T-cell (primary cell): ENCODE measurements at regions of chr7 and their contacts with region 1.

Region 1: DNA sequence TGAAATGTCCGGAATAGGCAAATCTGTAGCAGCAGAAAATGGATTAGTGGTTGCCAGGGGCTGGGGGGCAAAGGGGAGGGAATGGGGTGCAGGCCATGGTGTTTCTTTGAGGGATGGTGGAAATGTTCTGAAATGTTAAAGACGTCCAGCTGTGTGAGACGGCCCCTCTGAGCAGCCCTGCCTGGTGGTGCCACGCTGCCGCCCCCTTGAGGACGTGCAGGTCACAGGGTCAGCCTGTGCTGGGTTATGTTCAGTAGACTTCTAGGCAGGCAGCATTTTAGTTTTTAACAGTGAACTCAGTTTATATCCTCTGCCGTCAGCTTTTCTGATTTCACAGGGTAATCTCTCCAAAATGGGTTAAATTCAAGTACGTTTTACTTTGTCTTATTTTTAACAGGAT is 9.4 kb downstream of the NUB1 start:
- DNase-seq: peak in 3 of 35 experiments; percentile 20 to 44 (median 26)
- ATAC-seq: no peak
- H3K4me3 ChIP-seq: no peak overlapping the region
- H3K4me3 Mint-ChIP-seq: peak overlapping the region; percentile 17 to 78 (median 60)
- H3K27ac ChIP-seq: peak overlapping the region; percentile 98
- H3K27ac Mint-ChIP-seq: peak overlapping the region; percentile 86 to 91
- H3K4me1 ChIP-seq: peaks cover 28 to 37% of the 10 kb centered on the region in 2 experiments
- H3K4me1 Mint-ChIP-seq: peaks cover 56 to 65% (median 61%) of the 10 kb centered on the region in 3 donors
- H3K27me3 ChIP-seq: no peaks in the 10 kb centered on the region
- H3K27me3 Mint-ChIP-seq: no peaks in the 10 kb centered on the region

Region 2: DNA sequence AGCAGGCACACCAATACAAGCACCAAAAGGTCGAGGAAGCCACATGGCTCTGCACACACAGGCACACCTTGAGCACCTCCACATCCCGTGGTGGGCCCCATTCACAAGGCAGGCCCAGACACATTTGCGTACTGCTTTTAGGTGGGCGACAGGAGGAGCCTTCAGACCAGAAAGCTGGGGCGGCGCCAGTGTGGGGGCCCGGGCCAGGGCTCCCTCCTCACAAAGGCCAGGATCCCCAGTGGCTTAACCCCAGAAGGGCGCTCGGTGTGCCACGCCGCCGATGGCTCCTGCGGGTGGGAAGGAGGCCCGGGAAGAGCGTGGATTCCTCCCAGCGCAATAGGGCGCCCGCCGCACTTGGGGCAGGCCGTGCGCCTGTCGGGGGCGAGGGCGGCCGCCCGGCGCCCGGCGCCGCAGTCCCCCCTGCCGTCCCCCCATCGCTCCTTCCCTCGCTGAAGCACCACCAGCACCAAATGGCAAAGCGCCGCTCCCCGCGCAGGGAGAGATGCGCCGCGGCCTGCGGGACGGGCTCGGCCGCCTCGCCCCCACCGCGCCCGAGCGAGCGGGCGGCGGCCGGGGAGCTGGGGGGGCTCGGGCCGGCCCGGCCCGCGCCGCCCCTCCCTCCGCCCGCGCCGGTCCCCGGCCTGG is 99.6 kb before region 1 on chr7:
- CTCF ChIA-PET with region 1: no interaction called
- POLR2A ChIA-PET with region 1: no interaction called
- DNase-seq: peak in 9 of 35 experiments; percentile 16 to 56 (median 41)
- ATAC-seq: peak; percentile 32 to 45 (median 42)
- H3K4me3 ChIP-seq: peak overlapping the region in 1 of 2 donors; percentile 55
- H3K4me3 Mint-ChIP-seq: peak overlapping the region; percentile 66 to 87 (median 67)
- H3K27ac ChIP-seq: no peak overlapping the region
- H3K27ac Mint-ChIP-seq: no peak overlapping the region
- H3K4me1 ChIP-seq: peaks cover 5 to 41% of the 10 kb centered on the region in 2 experiments
- H3K4me1 Mint-ChIP-seq: peaks cover 29 to 45% (median 32%) of the 10 kb centered on the region in 3 donors
- H3K27me3 ChIP-seq: peaks cover 7 to 86% of the 10 kb centered on the region in 2 experiments
- H3K27me3 Mint-ChIP-seq: peaks cover 39 to 65% of the 10 kb centered on the region in 2 donors

Region 3: DNA sequence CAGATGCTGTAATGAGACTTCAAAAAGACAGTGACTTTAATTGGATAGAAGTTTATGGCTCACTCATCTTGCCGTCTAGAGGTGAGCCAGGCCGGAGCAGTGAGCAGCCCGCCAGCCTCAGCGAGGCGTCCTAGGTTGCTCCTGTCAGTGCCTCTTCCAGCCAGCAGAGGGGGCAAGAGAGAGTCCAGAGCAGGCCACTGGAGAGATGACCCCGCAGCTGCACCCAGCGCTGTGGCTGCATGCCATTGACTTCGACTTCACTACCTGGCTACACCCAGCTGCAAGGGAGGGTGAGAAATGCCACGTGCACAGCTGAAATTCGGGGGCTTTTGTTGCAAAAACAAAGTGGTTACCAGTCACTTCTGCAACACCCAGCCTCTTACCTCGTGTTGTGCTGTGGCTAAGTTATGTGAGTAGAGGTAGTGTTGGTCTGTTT is 17.1 kb after region 1 on chr7:
- CTCF ChIA-PET with region 1: interaction called, 3 to 11 read pairs
- POLR2A ChIA-PET with region 1: interaction called in 1 of 2 experiments, 5 read pairs
- DNase-seq: peak; percentile 33 to 87 (median 63)
- ATAC-seq: peak; percentile 96 to 98 (median 97)
- H3K4me3 ChIP-seq: no peak overlapping the region
- H3K4me3 Mint-ChIP-seq: peak overlapping the region in 1 of 3 donors; percentile 22
- H3K27ac ChIP-seq: no peak overlapping the region
- H3K27ac Mint-ChIP-seq: peak overlapping the region in 1 of 2 donors; percentile 16
- H3K4me1 ChIP-seq: peaks cover 2 to 8% of the 10 kb centered on the region in 2 experiments
- H3K4me1 Mint-ChIP-seq: peaks cover 13 to 19% (median 13%) of the 10 kb centered on the region in 3 donors
- H3K27me3 ChIP-seq: no peaks in the 10 kb centered on the region
- H3K27me3 Mint-ChIP-seq: no peaks in the 10 kb centered on the region